ENCODE measurements at regions of chr6 and their contacts with region 1.

Region 1: GRCh38 chr6:147986846-147987245 is 355.8 kb upstream of the SASH1 start:
- DNase-seq: no peak
- ATAC-seq: no peak
- H3K4me3 ChIP-seq: no peak overlapping the region
- H3K27ac ChIP-seq: no peak overlapping the region
- H3K4me1 ChIP-seq: no peaks in the 10 kb centered on the region
- H3K27me3 ChIP-seq: no peaks in the 10 kb centered on the region
- CTCF ChIP-seq: no peak

Region 2: DNA sequence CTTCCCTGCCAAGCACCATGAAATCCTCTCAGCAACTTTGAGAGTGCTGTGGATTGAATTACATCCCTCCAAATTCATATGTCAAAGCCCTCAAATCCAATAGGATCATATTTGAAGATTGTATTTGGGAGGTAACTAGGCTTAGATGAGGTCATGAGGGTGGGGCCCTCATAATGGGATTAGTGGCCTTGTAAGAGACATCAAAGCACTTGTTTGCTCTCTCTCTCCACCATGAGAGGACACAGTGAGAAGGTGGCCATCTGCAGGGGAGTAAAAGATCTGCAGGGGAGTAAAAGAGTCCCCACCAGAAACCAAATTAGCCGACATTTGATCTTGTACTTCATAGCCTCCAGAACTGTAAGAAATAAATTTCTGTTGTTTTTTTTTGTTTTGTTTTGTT is 180.1 kb before region 1 on chr6:
- CTCF ChIA-PET with region 1: no interaction called
- POLR2A ChIA-PET with region 1: no interaction called
- in situ Hi-C with region 1: no loop called
- intact Hi-C with region 1: no loop called
- DNase-seq: no peak
- ATAC-seq: no peak
- H3K4me3 ChIP-seq: no peak overlapping the region
- H3K27ac ChIP-seq: no peak overlapping the region
- H3K4me1 ChIP-seq: no peaks in the 10 kb centered on the region
- H3K27me3 ChIP-seq: no peaks in the 10 kb centered on the region
- CTCF ChIP-seq: peak; percentile 20

Region 3: GRCh38 chr6:147970975-147971374 is 15.9 kb before region 1 on chr6:
- CTCF ChIA-PET with region 1: no interaction called
- POLR2A ChIA-PET with region 1: no interaction called
- in situ Hi-C with region 1: no loop called
- intact Hi-C with region 1: loop called (anchors 1 kb)
- DNase-seq: no peak
- ATAC-seq: peak; percentile 62; the same call in 1 of the 2 replicates
- H3K4me3 ChIP-seq: no peak overlapping the region
- H3K27ac ChIP-seq: no peak overlapping the region
- H3K4me1 ChIP-seq: no peaks in the 10 kb centered on the region
- H3K27me3 ChIP-seq: no peaks in the 10 kb centered on the region
- CTCF ChIP-seq: peak; percentile 29; the same call in 1 of the 2 replicates